Caco-2 (cell line): ENCODE measurements at regions of chr6 and their contacts with region 1.

Region 1: DNA sequence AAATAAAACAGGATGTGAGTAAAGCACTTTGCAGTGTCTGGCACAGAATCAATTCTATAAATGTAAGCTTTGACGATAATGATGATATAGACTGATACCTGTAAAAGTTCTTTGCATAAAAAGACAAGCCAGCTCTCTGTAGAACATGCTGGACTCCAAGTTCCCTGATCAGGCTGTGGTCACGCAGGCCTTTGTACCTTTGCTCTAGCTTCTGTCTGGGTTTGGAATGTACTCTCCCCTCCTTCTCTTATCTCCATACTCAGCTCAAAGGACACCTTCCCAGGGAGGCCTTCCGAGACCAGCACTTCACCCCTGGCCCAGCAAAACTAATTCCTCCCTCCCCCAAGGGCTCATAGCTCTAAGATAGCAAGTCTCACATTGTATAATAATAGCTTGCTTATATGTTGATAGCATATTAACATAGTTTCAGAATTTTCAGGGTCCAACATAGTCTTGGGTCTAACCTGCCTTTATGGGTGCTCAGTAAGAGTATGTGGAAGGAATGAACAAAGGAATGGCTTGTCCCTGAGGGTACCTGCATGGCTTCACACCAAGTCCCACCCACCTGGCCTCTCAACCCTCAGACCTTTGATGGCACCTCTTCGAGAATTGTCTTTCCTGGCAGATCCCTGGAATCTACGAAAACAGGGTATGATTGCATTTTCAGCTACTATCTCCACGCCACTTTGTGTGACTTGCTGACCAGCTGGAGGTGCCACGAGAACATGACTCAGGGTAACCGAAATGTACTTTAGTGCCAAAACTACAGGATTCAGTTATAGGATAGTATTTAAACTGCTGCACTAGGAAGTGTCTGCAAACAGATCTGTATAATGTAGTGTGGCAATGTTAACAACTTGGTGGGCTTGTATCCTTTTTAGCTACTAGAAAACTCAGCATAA is 41.7 kb upstream of the PIM1 start:
- DNase-seq: peak; percentile 82 to 88
- H3K4me3 ChIP-seq: no peak overlapping the region
- H3K4me3 Mint-ChIP-seq: peak overlapping the region; percentile 77
- H3K27ac Mint-ChIP-seq: peak overlapping the region; percentile 97
- H3K4me1 ChIP-seq: peaks cover 66% of the 10 kb centered on the region
- H3K4me1 Mint-ChIP-seq: peaks cover 50% of the 10 kb centered on the region
- H3K27me3 ChIP-seq: no peaks in the 10 kb centered on the region
- H3K27me3 Mint-ChIP-seq: no peaks in the 10 kb centered on the region
- CTCF ChIP-seq: no peak

Region 2: DNA sequence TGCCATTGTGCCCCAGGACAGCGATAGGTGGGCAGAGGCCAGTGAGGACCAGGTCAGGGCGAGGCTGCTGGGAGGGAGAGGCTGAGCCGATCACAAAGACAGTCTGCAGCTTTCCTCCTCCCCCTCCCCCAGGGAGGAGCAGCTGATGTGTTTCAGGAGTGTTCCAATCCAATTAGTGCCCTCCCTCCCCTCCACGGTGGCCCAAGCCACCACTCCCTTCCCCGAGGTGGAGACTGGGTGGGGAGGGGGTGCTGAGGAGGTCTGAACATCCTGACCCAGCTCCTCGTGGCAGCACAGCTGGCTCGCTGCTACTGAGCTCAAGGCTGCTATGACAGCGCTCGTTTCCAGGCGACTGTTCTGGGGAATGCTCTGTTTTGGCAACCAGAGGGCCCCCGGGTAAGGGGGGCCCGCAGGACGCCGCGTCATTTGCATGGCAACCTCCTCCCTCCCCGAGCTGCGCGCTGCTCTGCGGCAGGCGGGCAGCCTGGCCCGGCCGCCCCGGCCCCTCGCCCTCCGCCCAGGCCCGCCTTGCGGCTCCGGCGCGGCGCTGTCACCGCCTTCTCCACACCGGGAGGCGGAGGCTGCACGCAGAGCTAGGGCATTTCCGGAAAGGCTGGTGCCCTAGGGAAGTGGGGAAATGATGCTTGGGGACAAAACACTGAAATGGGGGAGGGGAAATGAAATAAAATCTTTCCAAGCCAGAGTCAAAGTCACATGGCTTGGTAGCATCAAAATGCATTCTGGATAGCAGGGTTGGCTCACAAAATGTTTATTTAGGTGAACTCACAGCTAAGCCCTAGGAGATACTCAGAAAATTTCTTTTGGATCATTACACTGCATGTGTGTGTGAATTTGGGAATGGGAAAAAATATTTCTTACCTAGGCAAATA is 25.7 kb before region 1 on chr6:
- CTCF ChIA-PET with region 1: interaction called, 6 read pairs
- POLR2A ChIA-PET with region 1: interaction called, 13 read pairs
- intact Hi-C with region 1: loop called (anchors 1 kb)
- DNase-seq: peak; percentile 84 to 88
- H3K4me3 ChIP-seq: peak overlapping the region; percentile 16
- H3K4me3 Mint-ChIP-seq: peak overlapping the region; percentile 82
- H3K27ac Mint-ChIP-seq: peak overlapping the region; percentile 92
- H3K4me1 ChIP-seq: peaks cover 53% of the 10 kb centered on the region
- H3K4me1 Mint-ChIP-seq: peaks cover 26% of the 10 kb centered on the region
- H3K27me3 ChIP-seq: no peaks in the 10 kb centered on the region
- H3K27me3 Mint-ChIP-seq: no peaks in the 10 kb centered on the region
- CTCF ChIP-seq: no peak

Region 3: GRCh38 chr6:37110500-37111461 is 17.4 kb before region 1 on chr6:
- CTCF ChIA-PET with region 1: interaction called, 20 read pairs
- POLR2A ChIA-PET with region 1: interaction called, 7 read pairs
- intact Hi-C with region 1: no loop called
- DNase-seq: peak in 1 of 2 experiments; percentile 43
- H3K4me3 ChIP-seq: no peak overlapping the region
- H3K4me3 Mint-ChIP-seq: peak overlapping the region; percentile 32
- H3K27ac Mint-ChIP-seq: peak overlapping the region; percentile 67
- H3K4me1 ChIP-seq: peaks cover 45% of the 10 kb centered on the region
- H3K4me1 Mint-ChIP-seq: peaks cover 36% of the 10 kb centered on the region
- H3K27me3 ChIP-seq: no peaks in the 10 kb centered on the region
- H3K27me3 Mint-ChIP-seq: no peaks in the 10 kb centered on the region
- CTCF ChIP-seq: no peak